Activated CD8-positive, alpha-beta T cell treated with anti-CD3 and anti-CD28 coated beads for 36 hours (primary cell): ENCODE measurements at regions of chr1 and their contacts with region 1.

Region 1: GRCh38 chr1:8015036-8015808 is 10.9 kb downstream of the ERRFI1 start:
- DNase-seq: peak; percentile 58
- ATAC-seq: peak; percentile 64
- H3K4me3 Mint-ChIP-seq: no peak overlapping the region
- H3K27ac Mint-ChIP-seq: no peak overlapping the region
- H3K4me1 Mint-ChIP-seq: peaks cover 7% of the 10 kb centered on the region
- H3K27me3 Mint-ChIP-seq: peaks cover 18% of the 10 kb centered on the region
- CTCF ChIP-seq: peak; percentile 64

Region 2: DNA sequence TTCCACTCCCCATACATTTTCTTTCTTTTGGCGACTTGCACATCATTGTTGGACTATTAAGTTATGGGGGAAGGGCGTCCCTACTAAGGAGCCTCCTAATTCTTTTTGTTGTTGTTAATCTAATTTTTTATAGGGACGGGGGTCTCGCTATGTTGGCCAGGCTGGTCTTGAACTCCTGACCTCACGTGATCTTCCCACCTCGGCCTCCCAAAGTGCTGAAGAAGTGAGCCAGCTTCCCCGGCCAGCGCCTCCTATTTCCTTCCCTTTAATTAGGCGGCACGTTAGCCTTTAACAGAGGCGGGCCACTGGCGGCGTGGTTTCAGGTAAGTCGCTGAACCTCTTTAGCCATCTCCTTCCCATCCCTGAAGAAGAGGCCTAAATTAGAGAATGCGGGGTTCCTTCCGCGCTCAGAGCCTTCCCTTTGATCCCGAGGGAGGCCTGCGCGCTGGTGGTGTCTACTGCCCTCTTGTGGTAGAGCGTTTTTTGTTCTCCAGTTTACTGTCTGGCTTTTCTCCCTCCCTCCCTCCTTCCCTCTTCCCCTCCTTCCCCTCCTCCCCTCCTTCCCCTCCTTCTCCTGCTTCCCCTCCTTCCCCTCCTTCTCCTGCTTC is 112.6 kb before region 1 on chr1:
- CTCF ChIA-PET with region 1: no interaction called
- POLR2A ChIA-PET with region 1: no interaction called
- intact Hi-C with region 1: no loop called
- DNase-seq: peak; percentile 68
- ATAC-seq: peak; percentile 75
- H3K4me3 Mint-ChIP-seq: peak overlapping the region; percentile 38
- H3K27ac Mint-ChIP-seq: no peak overlapping the region
- H3K4me1 Mint-ChIP-seq: peaks cover 16% of the 10 kb centered on the region
- H3K27me3 Mint-ChIP-seq: no peaks in the 10 kb centered on the region
- CTCF ChIP-seq: peak; percentile 80

Region 3: DNA sequence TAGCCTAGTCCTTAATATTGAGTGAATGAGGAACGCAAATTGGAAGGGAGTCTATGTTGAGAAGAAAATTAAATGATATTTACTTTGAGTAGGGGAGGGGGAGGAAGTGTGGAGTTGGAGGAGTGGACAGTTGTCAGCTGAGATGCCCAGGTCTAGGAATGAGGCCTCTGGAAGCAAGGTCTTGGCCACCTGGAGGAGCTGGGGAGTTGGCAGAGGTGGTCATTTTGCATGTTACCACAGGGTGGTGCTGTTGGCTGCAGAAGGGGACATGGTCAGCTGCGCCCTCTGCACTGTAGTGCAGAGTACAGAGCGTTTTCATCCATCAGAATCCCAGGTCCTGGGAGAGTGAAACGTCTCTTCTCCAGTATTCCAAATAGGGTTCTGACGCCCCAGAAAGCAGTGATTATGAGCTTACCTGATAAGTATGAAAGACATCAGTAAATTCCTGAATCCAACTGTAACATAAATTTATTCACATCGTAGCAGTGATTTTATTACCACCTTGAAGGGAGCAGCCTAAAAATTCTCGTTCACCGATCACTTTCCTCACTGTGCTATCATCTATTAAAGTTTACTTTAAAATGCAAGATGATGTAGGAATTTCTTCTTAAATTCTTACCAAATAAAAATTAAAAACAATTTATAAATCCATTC is 39.9 kb before region 1 on chr1:
- CTCF ChIA-PET with region 1: interaction called, 35 read pairs
- POLR2A ChIA-PET with region 1: no interaction called
- intact Hi-C with region 1: no loop called
- DNase-seq: peak; percentile 59
- ATAC-seq: peak; percentile 95
- H3K4me3 Mint-ChIP-seq: no peak overlapping the region
- H3K27ac Mint-ChIP-seq: peak overlapping the region; percentile 35
- H3K4me1 Mint-ChIP-seq: peaks cover 16% of the 10 kb centered on the region
- H3K27me3 Mint-ChIP-seq: no peaks in the 10 kb centered on the region
- CTCF ChIP-seq: peak; percentile 77

Region 4: DNA sequence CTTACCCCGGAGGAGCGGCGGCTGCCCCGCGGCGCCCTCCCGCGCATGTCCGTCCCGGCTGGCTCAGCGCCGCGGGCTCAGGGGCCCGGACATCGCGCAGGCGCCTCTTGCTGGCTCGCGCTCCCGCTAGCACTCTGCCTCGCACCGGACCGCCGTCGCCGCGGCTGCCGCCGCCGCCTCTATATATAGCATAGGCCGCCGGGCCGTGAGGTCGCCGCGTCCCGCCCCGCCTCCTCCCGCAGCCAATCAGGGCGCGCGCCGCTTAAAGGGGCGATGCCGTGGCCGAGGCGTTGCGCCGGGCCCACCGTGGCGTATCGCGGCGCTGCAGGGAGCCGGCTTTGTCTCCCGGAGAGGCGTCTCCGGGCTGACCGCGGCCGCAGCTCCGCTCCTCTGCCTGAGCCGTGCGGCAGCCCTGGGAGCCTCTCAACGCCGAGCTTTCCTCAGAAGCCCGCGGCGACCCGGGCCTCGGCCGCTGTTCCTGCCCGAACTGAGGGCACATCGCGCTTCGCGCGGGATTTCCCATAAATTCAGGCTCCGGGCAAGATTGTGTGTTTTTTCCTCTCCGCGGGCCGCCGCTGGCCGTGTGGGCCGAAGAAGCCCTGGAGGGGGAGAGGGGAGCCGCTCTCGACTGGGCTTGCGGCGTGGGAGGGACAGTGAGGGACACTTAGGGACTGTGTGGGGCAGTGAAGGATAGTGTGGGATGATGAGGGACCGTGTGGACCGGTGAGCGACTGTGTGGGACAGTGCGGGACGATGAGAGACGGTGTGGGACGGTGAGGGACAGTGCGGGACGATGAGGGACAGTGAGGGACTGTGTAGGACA is 11.1 kb after region 1 on chr1 and contains the start of gene ERRFI1:
- CTCF ChIA-PET with region 1: interaction called, 25 read pairs
- POLR2A ChIA-PET with region 1: no interaction called
- intact Hi-C with region 1: no loop called
- DNase-seq: peak; percentile 89
- ATAC-seq: peak; percentile 96
- H3K4me3 Mint-ChIP-seq: peak within 1 kb of the TSS; percentile 79
- H3K27ac Mint-ChIP-seq: peak within 1 kb of the TSS; percentile 47
- H3K4me1 Mint-ChIP-seq: peaks cover 9% of the 10 kb centered on the region
- H3K27me3 Mint-ChIP-seq: peaks cover 32% of the 10 kb centered on the region
- CTCF ChIP-seq: no peak
- total RNA-seq, gene ERRFI1: 1.6 to 2.2 TPM

Region 5: DNA sequence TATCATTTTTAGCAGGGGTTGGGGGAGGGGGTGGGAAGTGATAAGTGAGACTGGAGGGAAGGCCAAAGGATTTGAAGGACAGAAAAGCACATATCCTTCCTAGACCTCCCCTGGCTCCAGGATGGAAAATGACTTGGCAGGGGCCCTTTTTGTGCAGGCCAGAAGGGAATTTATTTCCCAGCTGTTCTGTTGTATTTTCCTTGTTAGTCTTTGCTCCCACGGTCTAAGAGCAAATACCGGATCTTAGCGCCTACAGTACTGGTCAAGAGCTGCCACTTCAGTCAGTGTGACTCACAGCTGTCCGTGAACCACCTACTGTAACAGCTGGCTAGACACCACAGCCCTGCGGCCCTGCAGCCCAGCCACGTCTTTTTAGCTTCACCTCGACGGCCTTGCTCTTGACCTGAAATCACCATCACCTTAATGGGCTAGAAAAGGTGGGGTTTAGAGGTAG is 61.9 kb after region 1 on chr1:
- CTCF ChIA-PET with region 1: no interaction called
- POLR2A ChIA-PET with region 1: no interaction called
- intact Hi-C with region 1: no loop called
- DNase-seq: no peak
- ATAC-seq: no peak
- H3K4me3 Mint-ChIP-seq: no peak overlapping the region
- H3K27ac Mint-ChIP-seq: no peak overlapping the region
- H3K4me1 Mint-ChIP-seq: no peaks in the 10 kb centered on the region
- H3K27me3 Mint-ChIP-seq: peaks cover 2% of the 10 kb centered on the region
- CTCF ChIP-seq: no peak

Region 6: DNA sequence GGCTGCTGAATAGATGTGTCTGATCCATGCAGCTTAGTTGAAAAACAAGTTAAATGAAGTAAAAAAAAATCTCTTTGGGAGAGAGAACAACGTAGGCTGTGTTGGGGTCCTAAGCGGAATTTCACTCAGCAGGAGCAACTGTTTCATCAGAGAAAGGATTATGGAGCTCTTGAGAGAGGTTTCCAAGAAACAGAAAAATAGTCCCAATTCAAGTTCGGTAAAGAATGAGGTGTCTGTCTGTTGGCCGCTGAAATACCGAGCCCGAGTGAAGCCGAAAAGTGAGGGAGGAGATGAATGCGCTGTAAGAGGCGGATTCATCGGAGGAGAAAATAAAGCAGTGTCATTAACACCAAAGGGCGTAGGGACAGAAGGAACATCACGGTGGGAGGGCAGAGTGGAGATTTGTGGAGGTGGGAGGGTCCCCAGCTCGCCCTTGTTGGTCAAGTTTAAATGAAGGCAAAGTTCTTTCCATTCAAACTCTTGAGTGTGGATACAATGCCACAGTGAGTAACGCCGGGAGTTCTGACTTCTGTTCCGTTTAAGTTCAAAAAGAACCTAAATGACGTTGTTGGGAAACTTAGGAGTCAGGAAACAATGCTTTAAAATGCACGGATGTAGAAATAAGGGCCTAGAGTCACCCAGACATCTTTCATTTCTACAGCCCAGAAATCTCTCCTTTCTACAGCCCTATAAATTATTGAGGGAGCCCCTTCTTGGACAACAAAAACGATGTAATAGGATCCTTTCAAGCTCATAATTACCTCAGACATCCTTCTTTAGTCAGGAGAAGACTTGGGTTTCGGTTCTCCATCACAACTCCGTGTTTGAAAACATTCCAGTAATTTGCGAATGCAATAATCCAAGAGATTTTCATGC is 287.1 kb after region 1 on chr1:
- CTCF ChIA-PET with region 1: interaction called, 14 read pairs
- POLR2A ChIA-PET with region 1: interaction called, 3 read pairs
- intact Hi-C with region 1: no loop called
- DNase-seq: no peak
- ATAC-seq: no peak
- H3K4me3 Mint-ChIP-seq: no peak overlapping the region
- H3K27ac Mint-ChIP-seq: no peak overlapping the region
- H3K4me1 Mint-ChIP-seq: no peaks in the 10 kb centered on the region
- H3K27me3 Mint-ChIP-seq: peaks cover 8% of the 10 kb centered on the region
- CTCF ChIP-seq: no peak

Region 7: DNA sequence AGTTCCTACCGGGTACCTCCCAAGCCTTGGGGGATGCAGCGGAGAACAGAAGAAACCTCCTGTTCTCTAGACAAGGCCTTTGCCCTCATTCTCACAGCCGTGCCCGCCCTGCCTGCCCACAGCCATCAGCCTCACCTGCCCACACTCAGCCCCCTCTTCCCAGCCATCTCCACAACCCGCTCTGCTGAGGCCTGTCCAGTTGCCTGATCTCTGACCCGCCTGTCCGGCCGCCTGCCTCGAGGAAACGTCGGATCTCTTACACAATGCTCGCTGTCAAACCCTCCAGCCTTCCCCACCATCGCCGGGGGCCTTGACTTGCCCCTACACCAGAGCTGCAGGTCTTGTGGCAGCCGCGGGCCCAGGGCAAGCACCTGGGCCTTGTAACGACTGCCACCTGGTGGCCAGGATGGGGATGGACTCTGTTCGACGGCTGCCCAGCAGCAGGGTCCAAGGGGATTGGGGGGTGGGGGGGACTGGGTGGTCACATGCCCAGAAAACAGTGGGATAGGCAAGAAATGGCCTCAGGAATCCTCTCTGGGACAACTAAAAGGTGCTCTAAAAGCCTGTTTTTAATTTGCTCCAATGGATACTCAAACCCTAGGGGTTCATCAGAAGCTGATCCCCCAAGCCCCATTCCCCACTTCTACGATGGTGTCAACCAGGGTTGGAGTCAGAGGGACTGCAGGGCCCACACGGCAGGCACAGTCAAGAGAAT is 333.7 kb after region 1 on chr1:
- CTCF ChIA-PET with region 1: interaction called, 120 read pairs
- POLR2A ChIA-PET with region 1: interaction called, 3 read pairs
- intact Hi-C with region 1: loop called (anchors 5 kb)
- DNase-seq: peak; percentile 75
- ATAC-seq: peak; percentile 87
- H3K4me3 Mint-ChIP-seq: no peak overlapping the region
- H3K27ac Mint-ChIP-seq: no peak overlapping the region
- H3K4me1 Mint-ChIP-seq: no peaks in the 10 kb centered on the region
- H3K27me3 Mint-ChIP-seq: peaks cover 1% of the 10 kb centered on the region
- CTCF ChIP-seq: peak; percentile 78